ENCODE measurements at regions of chr14 and their contacts with region 1.

Region 1: DNA sequence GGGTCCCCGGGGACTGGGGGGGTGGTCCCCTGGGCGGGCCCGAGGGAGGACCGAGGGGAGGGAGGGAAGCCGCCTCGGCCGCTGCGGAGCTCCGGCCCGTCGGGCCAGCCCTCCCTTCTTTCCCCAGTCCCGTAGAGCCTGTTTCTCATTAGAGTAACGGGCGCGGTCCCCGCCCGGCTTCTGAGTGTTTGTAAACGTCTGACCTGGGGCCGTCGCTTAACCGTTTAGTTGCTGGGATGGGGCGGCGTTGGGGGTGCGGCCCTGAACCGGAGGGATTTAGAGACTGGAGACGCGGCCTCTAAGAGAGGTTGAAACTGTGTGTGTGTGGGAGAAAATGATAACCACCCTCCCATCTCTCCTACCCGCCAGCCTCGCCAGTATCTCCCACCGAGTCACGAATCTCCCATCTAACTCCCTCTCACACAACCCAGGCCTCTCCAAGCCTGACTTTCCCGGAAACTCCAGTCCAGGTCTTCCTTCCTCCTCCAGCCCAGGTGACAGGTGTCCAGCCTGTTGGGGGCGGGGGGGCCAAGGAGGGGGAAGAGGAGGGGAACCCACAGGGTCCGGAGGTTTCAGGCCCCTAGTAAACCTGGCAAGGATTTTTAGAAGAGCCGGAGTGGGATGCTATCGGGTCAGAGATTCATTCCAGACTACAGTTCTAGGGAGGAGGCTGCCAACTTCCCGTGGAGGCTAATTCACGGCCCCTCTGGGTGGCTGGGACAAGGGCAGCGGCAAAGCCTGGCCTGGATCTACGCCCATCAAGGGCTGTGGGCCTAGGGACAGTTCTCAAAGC is 1.1 kb upstream of the NFATC4 start:
- DNase-seq: peak; percentile 57
- ATAC-seq: peak; percentile 14
- H3K4me3 Mint-ChIP-seq: peak overlapping the region; percentile 61
- H3K27ac Mint-ChIP-seq: no peak overlapping the region
- H3K4me1 Mint-ChIP-seq: peaks cover 32% of the 10 kb centered on the region
- H3K27me3 Mint-ChIP-seq: peaks cover 40% of the 10 kb centered on the region
- CTCF ChIP-seq: no peak

Region 2: DNA sequence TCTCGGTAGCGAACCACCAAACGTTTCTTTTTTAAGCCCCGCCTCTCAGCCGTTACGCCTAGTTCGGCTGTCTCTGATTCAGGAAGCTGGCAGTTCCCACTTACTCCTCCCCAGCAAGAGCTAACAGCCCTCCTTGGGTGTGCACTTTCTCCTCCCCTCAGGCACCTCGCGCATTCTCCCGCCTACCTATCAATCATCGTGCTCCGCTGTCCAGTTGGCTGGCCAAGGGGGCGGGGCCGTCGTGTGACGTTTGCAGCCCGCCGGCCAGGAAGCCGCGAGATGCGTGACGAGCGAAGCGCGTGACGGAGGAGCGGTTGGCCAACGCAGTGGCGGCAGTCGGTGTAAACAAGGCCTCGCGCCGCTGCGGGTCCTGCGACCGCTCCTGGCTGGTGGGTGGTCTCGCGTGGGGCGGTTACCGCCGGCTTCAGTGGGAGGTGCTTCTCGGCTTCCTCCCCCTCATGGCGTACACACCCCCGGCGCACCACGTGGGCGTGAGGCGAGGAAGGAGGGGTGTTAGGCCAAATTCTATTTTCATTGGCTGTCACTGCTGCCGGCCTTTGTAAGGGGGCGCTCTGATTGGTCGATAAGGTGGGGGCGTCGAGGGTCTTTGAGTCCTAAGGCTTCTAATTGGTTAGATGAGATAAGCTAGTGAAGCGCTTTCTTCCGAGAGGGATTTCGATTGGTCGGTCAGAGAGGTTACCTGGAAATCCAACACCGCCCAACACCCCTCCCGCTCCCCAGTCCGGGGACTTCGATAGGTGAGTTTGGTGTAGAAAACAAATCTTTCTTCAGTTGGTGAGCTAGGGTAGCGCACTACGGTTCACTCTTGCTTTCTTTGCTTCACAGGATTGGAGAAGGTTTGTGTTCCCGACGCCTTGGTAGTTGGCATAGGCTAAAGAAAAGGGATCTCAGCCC is 252.1 kb before region 1 on chr14 and contains the starts of genes DCAF11 and NRL:
- CTCF ChIA-PET with region 1: no interaction called
- POLR2A ChIA-PET with region 1: no interaction called
- intact Hi-C with region 1: no loop called
- DNase-seq: peak; percentile 99
- ATAC-seq: peak; percentile 88
- H3K4me3 Mint-ChIP-seq: peak within 1 kb of the TSS; percentile 98
- H3K27ac Mint-ChIP-seq: peak within 1 kb of the TSS; percentile 99
- H3K4me1 Mint-ChIP-seq: peaks cover 20% of the 10 kb centered on the region
- H3K27me3 Mint-ChIP-seq: no peaks in the 10 kb centered on the region
- CTCF ChIP-seq: no peak
- total RNA-seq, gene DCAF11: 59.9 to 63.9 TPM
- total RNA-seq, gene NRL: 1.8 to 2.5 TPM

Region 3: DNA sequence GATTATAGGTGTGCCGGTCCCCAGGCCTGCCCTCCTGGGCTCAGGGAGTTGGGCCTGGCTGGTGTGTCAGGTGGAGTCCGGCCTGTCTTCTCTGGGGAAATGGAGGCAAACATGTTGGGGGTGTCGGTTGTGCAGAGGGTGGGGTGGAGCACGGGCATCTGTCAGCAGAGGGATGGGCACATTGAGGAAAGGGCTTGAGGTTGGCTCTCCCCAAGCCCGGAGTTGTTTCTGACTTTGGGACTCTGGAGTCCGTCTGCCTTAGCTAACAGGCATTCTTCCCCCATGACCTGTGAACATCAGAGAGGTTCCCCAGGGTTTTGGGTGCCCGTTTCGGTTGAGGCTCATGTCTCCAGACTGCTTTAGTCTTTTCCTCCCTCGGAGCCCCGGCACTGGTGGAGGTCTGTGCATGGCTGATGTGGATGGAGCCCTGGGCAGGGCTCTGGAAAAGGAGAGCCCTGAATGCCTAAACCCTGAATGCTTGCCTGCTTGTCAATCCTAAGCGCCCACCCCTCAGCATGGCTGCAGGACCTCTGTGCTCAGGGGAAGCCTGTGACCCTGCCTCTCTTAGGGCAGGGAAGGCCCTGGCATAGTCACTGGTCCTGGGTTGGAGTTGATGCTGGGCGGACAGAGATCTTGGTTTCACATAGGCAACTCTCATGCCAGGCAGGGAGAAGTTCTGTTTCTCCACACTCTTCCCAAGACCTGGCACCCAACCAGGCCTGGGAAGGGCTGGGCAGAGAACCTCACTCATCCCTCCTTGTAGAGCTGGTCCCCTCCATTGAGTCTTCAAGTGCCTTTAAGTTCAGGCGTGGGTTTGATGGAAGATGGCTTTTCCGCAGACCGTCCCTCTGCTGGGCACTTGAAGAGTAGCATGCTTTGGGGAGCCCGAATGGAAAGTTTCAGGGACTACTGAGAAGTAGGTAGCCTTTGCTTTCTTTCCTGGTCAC is 44.8 kb after region 1 on chr14:
- CTCF ChIA-PET with region 1: interaction called, 13 read pairs
- POLR2A ChIA-PET with region 1: interaction called, 3 read pairs
- intact Hi-C with region 1: no loop called
- DNase-seq: peak; percentile 49
- ATAC-seq: peak; percentile 87
- H3K4me3 Mint-ChIP-seq: no peak overlapping the region
- H3K27ac Mint-ChIP-seq: no peak overlapping the region
- H3K4me1 Mint-ChIP-seq: no peaks in the 10 kb centered on the region
- H3K27me3 Mint-ChIP-seq: no peaks in the 10 kb centered on the region
- CTCF ChIP-seq: peak; percentile 57

Region 4: GRCh38 chr14:24425704-24426103 is 58.8 kb after region 1 on chr14:
- CTCF ChIA-PET with region 1: interaction called, 73 read pairs
- POLR2A ChIA-PET with region 1: interaction called, 19 read pairs
- intact Hi-C with region 1: loop called (anchors 5 kb)
- DNase-seq: no peak
- ATAC-seq: no peak
- H3K4me3 Mint-ChIP-seq: no peak overlapping the region
- H3K27ac Mint-ChIP-seq: peak overlapping the region; percentile 31
- H3K4me1 Mint-ChIP-seq: peaks cover 23% of the 10 kb centered on the region
- H3K27me3 Mint-ChIP-seq: no peaks in the 10 kb centered on the region
- CTCF ChIP-seq: no peak

Region 5: GRCh38 chr14:24442273-24443052 is 75.5 kb after region 1 on chr14 and contains the start of gene SDR39U1:
- CTCF ChIA-PET with region 1: interaction called, 39 read pairs
- POLR2A ChIA-PET with region 1: interaction called, 11 read pairs
- intact Hi-C with region 1: no loop called
- DNase-seq: peak; percentile 98
- ATAC-seq: peak; percentile 91
- H3K4me3 Mint-ChIP-seq: peak within 1 kb of the TSS; percentile 86
- H3K27ac Mint-ChIP-seq: peak within 1 kb of the TSS; percentile 98
- H3K4me1 Mint-ChIP-seq: peaks cover 40% of the 10 kb centered on the region
- H3K27me3 Mint-ChIP-seq: no peaks in the 10 kb centered on the region
- CTCF ChIP-seq: no peak
- total RNA-seq, gene SDR39U1: 43.6 to 55.5 TPM

Measured in activated CD8-positive, alpha-beta T cell treated with anti-CD3 and anti-CD28 coated beads for 36 hours (primary cell).